ENCODE measurements at regions of chr14 and their contacts with region 1.

Region 1: DNA sequence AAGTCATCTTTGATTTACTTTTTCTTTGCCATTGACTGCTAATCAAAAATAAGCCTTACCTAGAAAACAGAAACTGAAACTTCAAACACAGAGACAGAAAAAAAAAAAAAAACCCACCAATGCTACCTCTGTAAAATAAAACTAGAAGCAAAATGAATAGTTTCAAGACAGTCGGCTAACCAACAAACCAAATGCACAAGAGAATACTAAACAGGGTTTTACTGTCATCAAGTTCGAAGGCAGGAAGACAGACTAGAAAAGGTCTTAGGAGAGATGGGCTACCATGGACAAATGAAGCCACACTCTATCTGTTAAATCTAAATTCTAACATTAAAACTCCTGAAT is 59.5 kb downstream of the SEL1L start:
- DNase-seq: peak; percentile 27
- ATAC-seq: peak; percentile 36
- H3K4me3 ChIP-seq: peak overlapping the region in 2 of 5 experiments; percentile 5 to 20
- H3K4me3 Mint-ChIP-seq: peak overlapping the region; percentile 70
- H3K27ac ChIP-seq: peak overlapping the region; percentile 17 to 82
- H3K27ac Mint-ChIP-seq: peak overlapping the region; percentile 90
- H3K4me1 ChIP-seq: peaks cover 16 to 20% of the 10 kb centered on the region in 2 donors
- H3K4me1 Mint-ChIP-seq: peaks cover 44% of the 10 kb centered on the region
- H3K27me3 ChIP-seq: no peaks in the 10 kb centered on the region
- H3K27me3 Mint-ChIP-seq: no peaks in the 10 kb centered on the region
- CTCF ChIP-seq: no peak

Region 2: GRCh38 chr14:80941241-80942182 is 532.6 kb before region 1 on chr14 and contains the start of gene CEP128:
- CTCF ChIA-PET with region 1: interaction called, 3 read pairs
- POLR2A ChIA-PET with region 1: no interaction called
- intact Hi-C with region 1: loop called (anchors 5 kb)
- DNase-seq: peak; percentile 80
- ATAC-seq: peak; percentile 92
- H3K4me3 ChIP-seq: peak within 1 kb of the TSS; percentile 71 to 83 (median 71)
- H3K4me3 Mint-ChIP-seq: peak within 1 kb of the TSS; percentile 84
- H3K27ac ChIP-seq: peak within 1 kb of the TSS; percentile 15 to 59
- H3K27ac Mint-ChIP-seq: peak within 1 kb of the TSS; percentile 71
- H3K4me1 ChIP-seq: peaks cover 15 to 18% of the 10 kb centered on the region in 2 donors
- H3K4me1 Mint-ChIP-seq: peaks cover 19% of the 10 kb centered on the region
- H3K27me3 ChIP-seq: no peaks in the 10 kb centered on the region
- H3K27me3 Mint-ChIP-seq: no peaks in the 10 kb centered on the region
- CTCF ChIP-seq: no peak
- total RNA-seq, gene CEP128: 31.6 and 34.8 TPM in 2 replicates

Region 3: DNA sequence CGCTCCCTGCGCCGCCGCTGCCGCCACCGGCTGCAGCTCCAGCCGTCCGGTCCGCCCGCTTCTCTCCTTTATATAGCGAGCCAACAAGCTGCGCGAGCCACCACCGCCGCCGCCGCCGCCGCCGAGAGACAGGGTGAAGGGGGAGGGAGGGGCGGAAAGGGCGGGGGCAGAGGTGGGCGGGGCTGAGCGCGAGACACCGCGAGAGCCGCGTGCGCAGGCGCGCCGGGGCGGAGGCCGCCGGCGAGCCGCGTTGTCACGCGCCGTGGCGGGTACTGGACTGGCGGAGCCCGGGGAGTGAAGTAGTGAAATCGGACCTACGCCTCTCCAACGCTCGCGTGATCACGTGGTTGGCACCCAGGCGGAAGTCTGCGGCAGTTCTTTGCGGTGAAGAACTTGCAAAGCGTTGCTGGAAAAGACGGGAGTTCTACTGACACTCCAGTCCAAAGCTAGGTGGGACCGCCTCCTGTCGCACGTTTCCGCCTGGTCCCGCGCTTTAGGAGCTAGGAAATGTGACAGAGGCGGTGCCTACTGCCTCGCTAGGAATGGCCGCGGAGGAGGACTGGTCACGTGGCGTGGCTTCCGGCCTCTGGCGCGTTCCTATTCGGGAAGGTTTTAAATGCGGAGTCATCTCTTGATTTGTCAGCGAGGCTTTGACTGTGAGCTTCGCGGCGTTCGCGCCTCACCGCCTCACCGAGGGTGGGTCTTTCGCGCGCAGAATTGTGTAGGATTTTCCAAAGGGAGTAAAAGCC is 253.1 kb before region 1 on chr14 and contains the start of gene GTF2A1:
- CTCF ChIA-PET with region 1: no interaction called
- POLR2A ChIA-PET with region 1: no interaction called
- intact Hi-C with region 1: loop called (anchors 5 kb)
- DNase-seq: peak; percentile 99
- ATAC-seq: peak; percentile 70
- H3K4me3 ChIP-seq: peak within 1 kb of the TSS; percentile 89 to 99 (median 97)
- H3K4me3 Mint-ChIP-seq: peak within 1 kb of the TSS; percentile 97
- H3K27ac ChIP-seq: peak within 1 kb of the TSS; percentile 98 to 99
- H3K27ac Mint-ChIP-seq: peak within 1 kb of the TSS; percentile 100
- H3K4me1 ChIP-seq: peaks cover 13 to 16% of the 10 kb centered on the region in 2 donors
- H3K4me1 Mint-ChIP-seq: peaks cover 32% of the 10 kb centered on the region
- H3K27me3 ChIP-seq: no peaks in the 10 kb centered on the region
- H3K27me3 Mint-ChIP-seq: no peaks in the 10 kb centered on the region
- CTCF ChIP-seq: no peak
- total RNA-seq, gene GTF2A1: 44.0 and 45.1 TPM in 2 replicates

Region 4: GRCh38 chr14:81427348-81428058 is 46.6 kb before region 1 on chr14:
- CTCF ChIA-PET with region 1: no interaction called
- POLR2A ChIA-PET with region 1: no interaction called
- intact Hi-C with region 1: no loop called
- DNase-seq: no peak
- ATAC-seq: no peak
- H3K4me3 ChIP-seq: no peak overlapping the region
- H3K4me3 Mint-ChIP-seq: no peak overlapping the region
- H3K27ac ChIP-seq: no peak overlapping the region
- H3K27ac Mint-ChIP-seq: no peak overlapping the region
- H3K4me1 ChIP-seq: no peaks in the 10 kb centered on the region
- H3K4me1 Mint-ChIP-seq: no peaks in the 10 kb centered on the region
- H3K27me3 ChIP-seq: peaks cover 0 to 17% (median 8%) of the 10 kb centered on the region in 4 experiments
- H3K27me3 Mint-ChIP-seq: peaks cover 45% of the 10 kb centered on the region
- CTCF ChIP-seq: no peak

Region 5: DNA sequence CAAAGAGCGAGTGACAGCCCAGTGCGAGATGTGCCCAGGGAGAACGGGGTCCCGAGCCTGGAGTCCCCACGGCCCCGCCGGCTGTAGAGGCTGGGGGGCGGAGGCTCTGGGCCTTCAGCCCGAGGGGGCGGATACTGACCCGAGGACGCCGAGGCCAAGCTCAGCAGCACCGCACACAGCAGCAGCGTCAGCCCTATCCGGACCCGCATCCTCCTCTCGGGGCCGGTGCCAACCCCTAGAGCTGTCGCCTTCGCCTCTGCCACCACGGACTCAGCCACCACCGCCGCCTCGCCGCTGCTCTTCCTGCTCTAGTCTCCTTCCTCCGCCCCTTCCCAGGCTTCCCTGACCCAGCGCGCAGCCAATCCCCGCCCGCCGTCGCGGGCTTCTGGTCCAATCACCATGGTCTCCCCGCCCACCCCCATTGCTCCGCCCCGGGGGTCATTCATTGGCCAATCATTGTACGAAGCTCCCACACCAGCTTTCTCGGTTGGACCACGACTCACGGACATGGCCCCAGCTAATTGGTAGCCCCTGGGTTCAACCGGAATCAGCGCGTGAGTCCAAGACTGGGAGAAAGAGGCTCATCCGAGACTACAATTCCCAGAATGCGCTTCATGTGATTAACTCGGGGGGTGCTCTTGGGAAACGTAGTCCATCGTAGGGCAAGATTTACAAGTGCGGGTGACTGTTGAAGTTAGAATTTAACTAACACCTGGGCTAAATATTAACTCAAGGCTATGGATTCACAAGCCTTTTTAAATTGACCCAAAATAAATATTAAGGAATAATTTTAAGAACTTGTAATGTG is 59.6 kb after region 1 on chr14 and contains the start of gene SEL1L:
- CTCF ChIA-PET with region 1: no interaction called
- POLR2A ChIA-PET with region 1: no interaction called
- intact Hi-C with region 1: loop called (anchors 1 kb)
- DNase-seq: peak; percentile 99
- ATAC-seq: peak; percentile 97
- H3K4me3 ChIP-seq: peak within 1 kb of the TSS; percentile 86 to 96 (median 92)
- H3K4me3 Mint-ChIP-seq: peak within 1 kb of the TSS; percentile 98
- H3K27ac ChIP-seq: peak within 1 kb of the TSS in 1 of 2 donors; percentile 77
- H3K27ac Mint-ChIP-seq: peak within 1 kb of the TSS; percentile 95
- H3K4me1 ChIP-seq: peaks cover 32% of the 10 kb centered on the region in 2 donors
- H3K4me1 Mint-ChIP-seq: peaks cover 54% of the 10 kb centered on the region
- H3K27me3 ChIP-seq: no peaks in the 10 kb centered on the region
- H3K27me3 Mint-ChIP-seq: no peaks in the 10 kb centered on the region
- CTCF ChIP-seq: no peak
- total RNA-seq, gene SEL1L: 50.0 and 53.8 TPM in 2 replicates